Aorta (tissue), 5 donors: ENCODE measurements at regions of chr5 and their contacts with region 1.

Region 1: GRCh38 chr5:169302491-169303118 is 1.7 kb upstream of the SLIT3 start:
- DNase-seq: peak; percentile 83 to 90
- ATAC-seq: peak; percentile 64
- H3K4me3 ChIP-seq: no peak overlapping the region
- H3K27ac ChIP-seq: no peak overlapping the region
- H3K4me1 ChIP-seq: peaks cover 0 to 4% of the 10 kb centered on the region in 2 donors
- H3K27me3 ChIP-seq: peaks cover 0 to 1% of the 10 kb centered on the region in 2 donors

Region 2: DNA sequence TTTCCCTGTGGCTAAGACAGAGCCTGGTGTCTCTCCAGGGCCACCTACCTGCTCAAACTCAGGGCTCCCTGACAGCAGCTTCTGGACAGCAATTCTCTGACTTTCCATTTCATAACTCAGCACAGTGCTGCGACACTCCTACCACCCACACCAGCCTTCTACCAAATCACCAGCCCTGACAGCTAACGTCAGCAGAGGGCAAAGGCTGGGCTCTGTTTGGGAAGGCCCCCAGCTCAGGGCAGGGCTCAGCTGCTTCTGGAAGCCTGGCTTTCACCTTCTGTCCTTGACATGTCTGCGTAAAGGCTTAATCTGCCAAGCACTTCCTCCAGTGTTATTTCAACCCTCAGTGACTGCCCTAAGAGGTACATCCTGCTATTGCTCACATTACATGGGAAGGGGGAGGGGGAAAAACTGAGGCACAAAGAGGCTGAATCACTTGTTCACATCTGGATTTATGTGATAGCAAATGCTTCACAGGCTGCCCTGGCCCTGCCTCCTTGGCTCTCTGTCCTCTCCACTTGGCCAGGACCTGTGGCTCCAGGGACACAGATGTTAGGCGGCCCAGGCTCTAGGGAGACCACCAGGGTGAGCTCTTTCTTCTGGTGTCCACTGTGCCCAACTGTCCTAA is 620.9 kb before region 1 on chr5:
- intact Hi-C with region 1: loop called (anchors 5 to 10 kb)
- DNase-seq: peak in 1 of 2 donors; percentile 70
- ATAC-seq: peak; percentile 45
- H3K4me3 ChIP-seq: no peak overlapping the region
- H3K27ac ChIP-seq: no peak overlapping the region
- H3K4me1 ChIP-seq: no peaks in the 10 kb centered on the region
- H3K27me3 ChIP-seq: no peaks in the 10 kb centered on the region

Region 3: DNA sequence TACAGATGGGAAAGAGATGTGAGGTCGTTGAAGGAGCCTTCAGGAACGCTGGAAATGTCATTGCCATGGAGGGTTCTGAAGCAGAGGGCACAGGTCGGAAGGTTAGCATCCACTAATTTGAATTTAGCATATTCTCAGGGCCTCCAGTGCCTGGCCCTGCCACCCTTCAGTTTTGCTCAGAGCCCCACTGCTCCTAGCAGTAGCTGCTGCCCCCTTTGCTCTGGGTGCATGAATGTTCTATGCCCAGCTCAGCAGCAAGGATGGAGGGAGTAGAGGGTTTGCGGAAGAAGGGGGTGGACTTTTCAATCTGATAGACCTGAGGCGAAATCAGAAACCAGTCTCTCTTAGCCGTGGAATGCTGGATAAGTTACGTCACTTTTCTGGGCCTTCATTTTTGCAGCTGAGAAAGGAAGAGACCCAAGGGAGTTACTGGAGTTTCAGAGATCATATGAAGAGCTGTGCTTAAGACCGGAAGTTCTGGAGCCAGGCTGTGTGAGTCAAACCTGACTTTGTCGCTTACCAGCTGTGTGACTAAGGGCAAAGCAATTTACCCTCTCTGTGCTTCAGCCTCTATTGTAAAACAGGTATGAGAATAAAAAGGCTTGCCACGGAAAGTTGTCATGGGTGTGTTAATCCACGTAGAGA is 590.2 kb before region 1 on chr5:
- intact Hi-C with region 1: loop called in 1 of 2 experiments (anchors 5 kb)
- DNase-seq: peak in 1 of 2 donors; percentile 67
- ATAC-seq: peak; percentile 72
- H3K4me3 ChIP-seq: no peak overlapping the region
- H3K27ac ChIP-seq: peak overlapping the region; percentile 3 to 6
- H3K4me1 ChIP-seq: no peaks in the 10 kb centered on the region
- H3K27me3 ChIP-seq: no peaks in the 10 kb centered on the region

Region 4: DNA sequence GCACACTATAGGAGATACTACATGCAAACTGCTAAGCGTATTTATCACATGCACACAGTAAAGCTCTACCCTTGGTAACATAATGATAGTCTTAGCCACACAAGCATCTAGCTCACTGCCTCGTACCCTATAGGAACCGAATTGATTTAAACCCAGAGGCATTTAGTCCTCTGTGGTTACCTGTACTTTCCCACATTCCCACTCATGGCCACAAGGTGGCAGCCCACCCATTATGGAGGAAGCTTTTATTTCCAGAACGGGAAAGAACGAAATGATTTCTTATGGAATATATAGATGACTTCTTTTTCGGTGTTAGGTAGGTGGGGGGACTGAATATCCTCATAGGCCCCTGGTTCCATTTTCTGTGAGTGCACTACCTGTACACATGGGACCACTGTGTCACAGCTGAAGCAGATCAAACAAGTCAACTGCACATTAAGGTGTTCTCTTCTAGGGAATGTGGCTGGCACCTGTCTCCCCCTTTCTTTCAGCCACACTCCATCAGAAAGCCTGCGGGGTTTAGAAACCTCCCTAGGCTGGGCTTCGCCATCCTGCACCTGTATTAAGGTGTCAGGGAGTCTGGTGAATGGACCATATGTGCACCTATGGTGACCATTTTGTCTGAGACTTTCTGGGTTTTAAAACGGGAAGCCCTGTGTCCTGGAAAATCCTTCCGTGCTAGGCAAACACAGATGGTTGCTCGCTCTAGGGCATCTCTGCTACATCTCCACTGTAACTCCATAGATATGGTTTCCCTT is 314.9 kb before region 1 on chr5:
- intact Hi-C with region 1: loop called (anchors 1 to 2 kb)
- DNase-seq: peak; percentile 80 to 89
- ATAC-seq: peak; percentile 68
- H3K4me3 ChIP-seq: no peak overlapping the region
- H3K27ac ChIP-seq: no peak overlapping the region
- H3K4me1 ChIP-seq: no peaks in the 10 kb centered on the region
- H3K27me3 ChIP-seq: no peaks in the 10 kb centered on the region

Region 5: GRCh38 chr5:169003721-169004541 is 298.7 kb before region 1 on chr5:
- intact Hi-C with region 1: loop called in 1 of 2 experiments (anchors 5 kb)
- DNase-seq: no peak
- ATAC-seq: peak; percentile 35
- H3K4me3 ChIP-seq: no peak overlapping the region
- H3K27ac ChIP-seq: no peak overlapping the region
- H3K4me1 ChIP-seq: no peaks in the 10 kb centered on the region
- H3K27me3 ChIP-seq: no peaks in the 10 kb centered on the region

Region 6: GRCh38 chr5:169548315-169548714 is 245.7 kb after region 1 on chr5:
- intact Hi-C with region 1: loop called in 1 of 2 experiments (anchors 10 kb)
- DNase-seq: no peak
- ATAC-seq: peak; percentile 64
- H3K4me3 ChIP-seq: no peak overlapping the region
- H3K27ac ChIP-seq: no peak overlapping the region
- H3K4me1 ChIP-seq: no peaks in the 10 kb centered on the region
- H3K27me3 ChIP-seq: no peaks in the 10 kb centered on the region

Region 7: GRCh38 chr5:169583424-169584204 is 281.0 kb after region 1 on chr5 and contains the start of gene SPDL1:
- intact Hi-C with region 1: loop called in 1 of 2 experiments (anchors 10 kb)
- DNase-seq: peak; percentile 96 to 98
- ATAC-seq: peak; percentile 98
- H3K4me3 ChIP-seq: peak within 1 kb of the TSS; percentile 58 to 64
- H3K27ac ChIP-seq: no peak within 1 kb of the TSS
- H3K4me1 ChIP-seq: peaks cover 0 to 4% of the 10 kb centered on the region in 2 donors
- H3K27me3 ChIP-seq: no peaks in the 10 kb centered on the region
- total RNA-seq, gene SPDL1: 5.4 to 6.4 TPM